Ascending aorta (tissue), 2 donors: ENCODE measurements at regions of chr19 and their contacts with region 1.

Region 1: DNA sequence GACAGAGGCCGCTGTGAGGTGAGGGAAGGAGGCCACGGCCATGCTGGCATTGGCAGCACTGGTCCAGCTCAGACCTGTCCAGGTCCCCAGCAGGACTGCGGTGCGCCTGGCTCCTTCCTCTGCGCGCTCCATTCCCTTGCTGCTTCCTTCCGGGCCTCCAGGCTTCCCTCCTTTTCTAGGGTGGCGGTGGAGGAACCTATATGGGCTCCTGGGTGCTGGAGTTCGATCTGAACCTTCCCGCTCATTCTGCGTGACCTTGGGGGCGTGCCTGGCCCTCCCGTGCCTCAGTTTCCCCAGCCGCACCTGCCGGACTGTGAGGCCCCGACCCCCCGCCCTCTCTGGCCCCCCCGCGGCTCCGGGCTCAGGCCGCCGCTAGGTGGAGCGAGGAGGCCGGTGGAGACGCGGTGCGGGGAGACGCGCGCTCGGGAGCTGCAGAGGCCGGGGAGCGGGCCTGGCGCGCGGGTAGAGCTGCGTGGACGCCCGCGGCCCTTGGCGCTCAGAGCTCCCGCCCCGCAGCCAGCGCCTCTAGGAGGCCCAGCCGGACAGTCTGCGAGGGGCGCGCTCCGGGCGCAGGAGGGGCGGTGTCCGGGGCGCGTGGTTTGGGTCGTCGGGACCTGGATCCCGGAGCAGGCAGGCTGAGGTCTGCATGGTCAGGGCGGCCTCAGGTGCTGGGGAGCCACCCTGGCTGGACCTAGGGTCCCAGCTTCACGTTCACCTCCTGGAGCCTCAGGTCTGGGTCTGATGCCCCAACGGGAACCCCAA is 30.0 kb downstream of the EFNA2 start:
- DNase-seq: no peak
- H3K4me3 ChIP-seq: peak overlapping the region in 1 of 2 donors; percentile 43
- H3K27ac ChIP-seq: no peak overlapping the region
- H3K4me1 ChIP-seq: no peaks in the 10 kb centered on the region
- H3K27me3 ChIP-seq: peaks cover 8% of the 10 kb centered on the region
- CTCF ChIP-seq: peak; percentile 34 to 69 (median 50)

Region 2: GRCh38 chr19:1360818-1361461 is 45.3 kb after region 1 on chr19:
- intact Hi-C with region 1: loop called (anchors 5 kb)
- DNase-seq: no peak
- H3K4me3 ChIP-seq: peak overlapping the region; percentile 35 to 52
- H3K27ac ChIP-seq: peak overlapping the region; percentile 56 to 57
- H3K4me1 ChIP-seq: peaks cover 4 to 29% of the 10 kb centered on the region in 2 donors
- H3K27me3 ChIP-seq: no peaks in the 10 kb centered on the region
- CTCF ChIP-seq: no peak